ENCODE measurements at regions of chr11 and their contacts with region 1.

Region 1: GRCh38 chr11:108647701-108648527 is 17.0 kb upstream of the DDX10 start:
- DNase-seq: peak; percentile 81
- ATAC-seq: peak; percentile 93

Region 2: GRCh38 chr11:108414958-108415357 is 233.0 kb before region 1 on chr11:
- intact Hi-C with region 1: loop called (anchors 5 kb)
- DNase-seq: no peak
- ATAC-seq: no peak

Region 3: GRCh38 chr11:108551651-108552462 is 96.1 kb before region 1 on chr11:
- intact Hi-C with region 1: no loop called
- DNase-seq: no peak
- ATAC-seq: no peak

Region 4: DNA sequence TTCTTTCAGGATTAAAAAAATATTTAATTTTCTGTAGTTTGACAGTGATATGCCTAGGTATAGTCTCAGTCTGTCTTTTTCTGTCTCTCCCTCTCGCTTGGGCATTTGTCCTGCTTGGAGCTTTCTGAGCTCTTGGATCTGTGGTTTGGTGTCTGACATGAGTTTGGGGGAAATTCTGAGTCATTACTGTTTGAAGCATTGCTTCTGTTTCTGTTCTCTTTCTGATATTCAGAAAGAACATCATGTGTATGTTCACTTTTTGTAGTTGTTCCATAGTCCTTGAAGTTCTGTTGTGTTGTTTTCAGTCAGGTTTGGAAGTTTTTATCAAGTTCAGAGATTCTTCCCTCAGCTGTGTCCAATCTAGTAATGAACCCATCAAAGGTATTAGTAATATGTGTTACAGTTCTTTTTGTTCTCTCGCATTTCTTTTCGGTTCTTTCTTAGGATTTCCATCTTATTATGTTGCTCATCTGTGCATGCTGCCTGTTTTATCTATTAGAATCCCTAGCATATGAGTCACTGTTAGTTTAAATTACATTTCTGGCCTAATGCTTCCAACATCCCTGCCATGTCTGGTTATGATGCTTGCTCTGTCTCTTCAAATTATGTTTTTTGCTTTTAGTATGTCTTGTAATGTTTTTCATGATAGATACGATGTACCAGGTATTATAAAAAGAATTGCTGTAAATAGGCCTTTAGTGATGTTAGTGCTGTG is 65.3 kb after region 1 on chr11:
- intact Hi-C with region 1: no loop called
- DNase-seq: no peak
- ATAC-seq: no peak

Region 5: DNA sequence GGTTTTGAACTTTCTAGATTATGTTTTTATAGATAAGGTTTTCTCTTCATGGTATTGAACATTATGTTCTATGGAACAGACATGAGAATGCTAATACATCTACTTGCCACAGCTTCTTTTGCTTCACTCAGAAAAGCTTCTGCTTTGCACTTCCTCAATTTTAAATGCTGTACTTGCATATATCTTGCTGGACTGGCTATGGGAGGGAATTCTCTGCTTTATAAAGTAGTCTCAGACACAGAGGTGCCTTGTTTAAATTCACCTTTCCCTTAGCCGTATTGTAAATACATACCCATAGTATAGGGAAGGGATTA is 190.8 kb after region 1 on chr11:
- intact Hi-C with region 1: no loop called
- DNase-seq: no peak
- ATAC-seq: no peak